PC-9 (cell line): ENCODE measurements at regions of chr1 and their contacts with region 1.

Region 1: DNA sequence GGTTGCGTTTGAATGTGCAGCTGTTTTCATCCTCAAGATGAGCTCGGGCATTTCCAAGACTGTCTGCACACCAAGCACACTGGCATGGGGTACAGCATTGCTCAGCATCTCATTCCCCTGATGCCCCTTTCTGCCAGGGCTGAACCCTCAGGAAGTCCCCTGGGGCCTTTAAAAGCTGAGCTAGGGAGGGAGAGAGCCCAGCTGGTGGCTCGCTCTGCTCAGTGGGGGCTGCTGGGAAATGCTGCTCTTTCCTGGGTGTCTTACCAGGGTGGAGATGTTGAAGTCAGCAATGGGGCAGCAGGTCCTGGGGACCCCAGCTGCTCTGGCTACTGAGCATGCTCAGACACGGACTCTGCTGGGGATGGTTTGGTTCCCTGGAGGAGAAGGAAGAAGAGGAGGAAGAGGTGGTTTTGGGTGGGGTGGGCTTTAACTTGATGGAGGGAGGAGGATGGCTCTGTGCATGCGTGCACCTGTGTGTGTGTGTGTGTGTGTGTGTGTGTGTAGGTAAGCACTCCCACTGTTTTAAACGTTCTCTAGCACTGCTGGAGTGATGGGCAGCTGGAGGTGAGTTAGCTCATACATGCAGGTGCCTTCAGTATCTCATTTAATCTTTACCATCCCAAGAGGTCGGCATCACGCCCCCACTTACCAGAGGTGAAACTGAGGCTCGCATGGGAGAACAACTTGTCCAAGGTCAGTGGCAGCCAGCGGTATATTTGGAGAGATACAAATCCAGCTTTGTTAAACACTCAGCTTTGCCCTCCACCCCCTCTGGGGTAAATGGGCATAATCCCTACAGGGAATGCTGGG is 40.9 kb downstream of the ACTL8 start:
- DNase-seq: no peak
- H3K4me3 ChIP-seq: no peak overlapping the region
- H3K27ac ChIP-seq: no peak overlapping the region
- H3K4me1 ChIP-seq: no peaks in the 10 kb centered on the region
- H3K27me3 ChIP-seq: 0 out of 2 replicates have a peak, but pooled peaks cover 4% of the 10 kb centered on the region
- CTCF ChIP-seq: no peak

Region 2: DNA sequence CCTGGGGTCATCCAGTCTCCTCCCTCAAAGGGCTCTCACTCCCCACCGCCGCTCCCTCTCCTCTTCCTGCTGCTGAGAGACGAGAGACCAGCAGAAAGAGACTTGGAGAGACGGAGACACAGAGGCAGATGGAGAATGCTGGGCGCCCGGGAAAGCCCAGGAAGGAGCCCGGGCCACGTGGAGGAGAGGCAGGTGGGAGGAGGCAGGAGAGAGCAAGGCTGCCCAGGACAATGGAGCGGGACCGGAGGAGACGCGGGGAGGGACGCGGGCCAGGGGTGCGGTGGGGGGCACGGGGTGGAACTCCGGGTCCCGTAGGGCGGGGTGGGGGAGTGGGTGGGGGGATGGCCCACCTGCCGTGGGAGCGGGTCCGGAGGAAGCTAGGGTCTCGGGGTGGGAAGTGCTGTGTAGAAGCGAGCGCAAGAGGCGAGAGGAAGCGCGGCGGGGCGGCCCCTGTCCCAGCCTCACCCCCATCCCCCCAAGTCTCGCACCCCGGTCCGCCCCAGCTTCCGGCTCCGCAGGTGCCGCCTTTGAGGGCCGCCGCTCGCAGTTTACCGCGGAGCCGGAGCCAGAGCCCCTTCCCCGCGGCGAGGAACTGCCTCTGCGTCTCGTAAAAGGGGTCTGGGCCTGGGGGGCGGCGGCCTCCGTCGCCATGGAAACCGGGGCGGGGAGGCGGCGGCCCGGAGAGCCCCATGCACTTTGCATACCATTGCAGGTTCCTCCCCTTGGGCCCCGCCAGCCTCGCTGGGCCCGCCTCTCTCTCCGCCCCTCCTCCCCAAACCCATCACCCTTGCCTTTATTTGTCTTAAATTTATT is 1628.5 kb before region 1 on chr1:
- CTCF ChIA-PET with region 1: no interaction called
- POLR2A ChIA-PET with region 1: interaction called, 17 read pairs
- intact Hi-C with region 1: no loop called
- DNase-seq: peak; percentile 68 to 85
- H3K4me3 ChIP-seq: peak overlapping the region; percentile 80
- H3K27ac ChIP-seq: peak overlapping the region; percentile 75
- H3K4me1 ChIP-seq: peaks cover 66% of the 10 kb centered on the region
- H3K27me3 ChIP-seq: no peaks in the 10 kb centered on the region
- CTCF ChIP-seq: no peak

Region 3: DNA sequence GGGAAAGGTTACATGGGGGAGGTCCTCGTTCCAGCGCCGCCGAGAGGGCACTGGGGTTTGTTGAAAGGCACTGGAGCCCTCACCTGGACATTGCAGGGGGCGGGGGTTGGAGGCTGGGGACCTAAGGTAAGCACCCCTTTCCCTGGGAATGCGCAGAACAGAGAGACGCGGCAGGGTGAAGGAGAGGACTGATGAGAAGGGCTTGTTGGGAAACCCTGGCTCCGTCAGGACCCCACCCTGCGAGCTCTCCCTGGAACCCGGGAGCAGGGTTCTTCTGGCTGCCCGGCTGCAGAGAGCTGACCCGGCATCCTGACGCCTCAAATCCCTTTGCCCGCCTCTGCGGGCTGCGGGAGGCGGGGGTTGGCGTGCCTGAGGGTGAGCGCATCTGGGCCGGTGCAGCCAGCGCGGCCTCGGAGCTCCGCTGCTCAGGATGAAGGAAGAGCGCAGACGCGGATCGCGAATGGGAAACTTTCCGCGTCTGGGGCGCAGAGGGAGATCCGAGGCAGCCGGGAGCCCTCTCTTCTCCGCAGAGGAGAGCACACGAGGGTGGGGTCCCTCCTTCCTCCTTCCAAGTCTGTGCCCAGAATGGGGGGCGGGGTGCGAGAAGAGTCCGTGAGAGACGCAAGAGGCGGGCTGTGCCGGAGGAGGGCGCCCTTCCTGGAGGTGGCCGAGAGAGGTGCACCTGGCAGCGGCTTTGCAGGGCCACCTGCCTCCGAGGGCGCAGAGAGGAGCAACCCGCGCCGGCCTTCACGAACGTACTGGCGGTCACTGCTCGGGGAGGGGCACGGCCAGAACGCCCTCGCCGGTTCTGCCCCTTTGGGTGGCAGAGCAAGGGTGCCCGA is 313.9 kb after region 1 on chr1:
- CTCF ChIA-PET with region 1: no interaction called
- POLR2A ChIA-PET with region 1: no interaction called
- intact Hi-C with region 1: no loop called
- DNase-seq: no peak
- H3K4me3 ChIP-seq: no peak overlapping the region
- H3K27ac ChIP-seq: no peak overlapping the region
- H3K4me1 ChIP-seq: no peaks in the 10 kb centered on the region
- H3K27me3 ChIP-seq: 0 out of 2 replicates have a peak, but pooled peaks cover under 1% of the 10 kb centered on the region
- CTCF ChIP-seq: no peak